Psoas muscle (tissue), 8 donors: ENCODE measurements at regions of chr6 and their contacts with region 1.

Region 1: GRCh38 chr6:114747987-114748630 is 405.3 kb upstream of the HS3ST5 start:
- DNase-seq: no peak
- ATAC-seq: no peak
- H3K4me3 ChIP-seq: no peak overlapping the region
- H3K27ac ChIP-seq: no peak overlapping the region
- H3K4me1 ChIP-seq: no peaks in the 10 kb centered on the region
- H3K27me3 ChIP-seq: no peaks in the 10 kb centered on the region
- CTCF ChIP-seq: peak; percentile 51

Region 2: DNA sequence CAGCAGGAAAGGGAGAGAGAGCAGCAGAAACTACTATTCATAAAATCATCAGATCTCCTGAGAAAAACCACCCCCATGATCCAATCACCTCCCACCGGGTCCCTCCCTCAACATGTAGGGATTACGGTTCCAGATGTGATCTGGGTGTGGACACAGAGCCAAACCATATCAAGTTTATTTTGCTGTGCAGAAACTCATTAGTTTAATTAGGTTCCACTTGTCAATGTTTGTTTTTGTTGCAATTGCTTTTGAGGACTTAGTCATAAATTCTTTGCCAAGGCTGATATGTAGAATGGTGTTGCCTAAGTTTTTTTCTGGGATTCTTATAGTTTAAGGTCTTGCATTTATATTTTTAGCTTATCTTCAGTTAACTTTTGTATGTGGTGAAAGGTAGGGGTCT is 16.8 kb after region 1 on chr6:
- intact Hi-C with region 1: no loop called
- DNase-seq: no peak
- ATAC-seq: no peak
- H3K4me3 ChIP-seq: no peak overlapping the region
- H3K27ac ChIP-seq: no peak overlapping the region
- H3K4me1 ChIP-seq: no peaks in the 10 kb centered on the region
- H3K27me3 ChIP-seq: no peaks in the 10 kb centered on the region
- CTCF ChIP-seq: no peak

Region 3: GRCh38 chr6:115870464-115870863 is 1122.4 kb after region 1 on chr6:
- intact Hi-C with region 1: no loop called
- DNase-seq: no peak
- ATAC-seq: no peak
- H3K4me3 ChIP-seq: no peak overlapping the region
- H3K27ac ChIP-seq: no peak overlapping the region
- H3K4me1 ChIP-seq: no peaks in the 10 kb centered on the region
- H3K27me3 ChIP-seq: no peaks in the 10 kb centered on the region
- CTCF ChIP-seq: no peak

Region 4: DNA sequence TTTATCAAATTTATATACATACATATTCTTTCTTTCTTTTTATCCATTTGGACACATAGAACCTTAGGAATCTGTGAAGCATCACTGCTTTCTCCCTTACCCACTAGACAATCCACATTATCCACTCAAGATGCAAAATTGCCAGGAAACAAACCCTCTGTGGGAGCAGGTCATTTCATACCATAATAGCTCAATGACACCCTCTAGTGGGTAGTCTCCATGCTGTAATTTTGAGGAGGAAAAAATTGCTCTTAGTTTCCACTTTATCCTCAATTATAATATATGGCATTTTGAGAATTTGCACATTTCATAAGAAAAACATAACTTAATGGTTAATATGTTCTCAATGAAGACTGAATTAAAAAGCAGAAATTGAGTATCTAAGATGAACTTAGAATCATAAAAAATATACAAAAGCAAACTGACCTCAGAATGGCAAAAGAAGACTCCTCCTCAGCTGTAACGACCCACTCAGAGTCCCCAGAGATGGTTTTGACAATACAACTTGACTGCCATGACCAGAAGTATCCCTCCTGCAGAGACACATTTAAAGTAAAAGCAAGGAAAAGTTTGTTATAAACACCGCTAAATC is 1148.5 kb after region 1 on chr6:
- intact Hi-C with region 1: loop called in 1 of 2 experiments (anchors 5 kb)
- DNase-seq: no peak
- ATAC-seq: no peak
- H3K4me3 ChIP-seq: no peak overlapping the region
- H3K27ac ChIP-seq: no peak overlapping the region
- H3K4me1 ChIP-seq: no peaks in the 10 kb centered on the region
- H3K27me3 ChIP-seq: no peaks in the 10 kb centered on the region
- CTCF ChIP-seq: peak; percentile 53